CD4-positive, alpha-beta T cell (primary cell): ENCODE measurements at regions of chr7 and their contacts with region 1.

Region 1: GRCh38 chr7:6447581-6448199 is at the start of gene DAGLB:
- DNase-seq: peak; percentile 92 to 99 (median 96)
- ATAC-seq: peak; percentile 76
- H3K4me3 ChIP-seq: peak within 1 kb of the TSS; percentile 89
- H3K4me3 Mint-ChIP-seq: peak within 1 kb of the TSS; percentile 99
- H3K27ac ChIP-seq: peak within 1 kb of the TSS; percentile 73 to 81
- H3K27ac Mint-ChIP-seq: peak within 1 kb of the TSS; percentile 99
- H3K4me1 ChIP-seq: peaks cover 36% of the 10 kb centered on the region
- H3K4me1 Mint-ChIP-seq: peaks cover 40% of the 10 kb centered on the region
- H3K27me3 ChIP-seq: no peaks in the 10 kb centered on the region
- H3K27me3 Mint-ChIP-seq: no peaks in the 10 kb centered on the region
- CTCF ChIP-seq: no peak
- total RNA-seq, gene DAGLB: 22.0 to 22.9 TPM

Region 2: GRCh38 chr7:4689668-4690067 is 1758.0 kb before region 1 on chr7:
- CTCF ChIA-PET with region 1: no interaction called
- POLR2A ChIA-PET with region 1: no interaction called
- intact Hi-C with region 1: loop called in 1 of 2 experiments (anchors 5 kb)
- DNase-seq: no peak
- ATAC-seq: no peak
- H3K4me3 ChIP-seq: no peak overlapping the region
- H3K4me3 Mint-ChIP-seq: no peak overlapping the region
- H3K27ac ChIP-seq: no peak overlapping the region
- H3K27ac Mint-ChIP-seq: peak overlapping the region; percentile 19
- H3K4me1 ChIP-seq: peaks cover 63% of the 10 kb centered on the region
- H3K4me1 Mint-ChIP-seq: peaks cover 76% of the 10 kb centered on the region
- H3K27me3 ChIP-seq: no peaks in the 10 kb centered on the region
- H3K27me3 Mint-ChIP-seq: no peaks in the 10 kb centered on the region
- CTCF ChIP-seq: no peak

Region 3: GRCh38 chr7:6272481-6273323 is 175.0 kb before region 1 on chr7 and contains the start of gene CYTH3:
- CTCF ChIA-PET with region 1: no interaction called
- POLR2A ChIA-PET with region 1: no interaction called
- intact Hi-C with region 1: loop called in 1 of 2 experiments (anchors 5 kb)
- DNase-seq: peak; percentile 39 to 91 (median 72)
- ATAC-seq: peak; percentile 82
- H3K4me3 ChIP-seq: peak within 1 kb of the TSS; percentile 74
- H3K4me3 Mint-ChIP-seq: peak within 1 kb of the TSS; percentile 91
- H3K27ac ChIP-seq: no peak within 1 kb of the TSS
- H3K27ac Mint-ChIP-seq: no peak within 1 kb of the TSS
- H3K4me1 ChIP-seq: peaks cover 21% of the 10 kb centered on the region
- H3K4me1 Mint-ChIP-seq: peaks cover 20% of the 10 kb centered on the region
- H3K27me3 ChIP-seq: no peaks in the 10 kb centered on the region
- H3K27me3 Mint-ChIP-seq: peaks cover 6% of the 10 kb centered on the region
- CTCF ChIP-seq: no peak
- total RNA-seq, gene CYTH3: 7.6 to 9.1 TPM

Region 4: GRCh38 chr7:6350433-6351058 is 97.1 kb before region 1 on chr7:
- CTCF ChIA-PET with region 1: no interaction called
- POLR2A ChIA-PET with region 1: interaction called, 4 read pairs
- intact Hi-C with region 1: loop called in 1 of 2 experiments (anchors 1 kb)
- DNase-seq: no peak
- ATAC-seq: no peak
- H3K4me3 ChIP-seq: no peak overlapping the region
- H3K4me3 Mint-ChIP-seq: peak overlapping the region; percentile 4
- H3K27ac ChIP-seq: no peak overlapping the region
- H3K27ac Mint-ChIP-seq: no peak overlapping the region
- H3K4me1 ChIP-seq: peaks cover 17% of the 10 kb centered on the region
- H3K4me1 Mint-ChIP-seq: peaks cover 7% of the 10 kb centered on the region
- H3K27me3 ChIP-seq: no peaks in the 10 kb centered on the region
- H3K27me3 Mint-ChIP-seq: peaks cover 10% of the 10 kb centered on the region
- CTCF ChIP-seq: no peak

Region 5: DNA sequence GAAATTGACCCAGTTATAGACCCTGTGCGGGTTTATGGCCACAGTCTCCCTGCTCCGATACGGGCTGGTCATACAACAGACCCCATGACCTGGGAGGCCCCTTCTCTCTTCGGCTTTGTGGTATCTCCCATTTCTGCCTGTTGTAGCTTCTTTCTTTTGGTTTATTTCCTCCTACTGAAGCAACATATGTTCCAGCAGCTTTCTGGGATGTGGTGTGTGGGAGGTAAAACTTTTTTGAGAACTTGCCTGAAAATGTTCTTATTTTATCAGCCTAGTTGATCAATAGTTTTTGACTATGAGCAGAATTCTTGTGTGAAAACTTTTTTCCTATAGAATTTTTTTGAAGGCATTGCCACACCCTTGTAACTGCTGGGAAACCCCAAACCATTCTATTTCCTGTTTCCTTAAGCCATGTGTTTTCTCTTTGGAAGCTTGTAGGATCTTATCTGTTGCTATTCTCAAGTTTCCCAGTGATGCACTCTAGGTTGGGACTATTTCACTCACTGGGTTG is 79.9 kb before region 1 on chr7:
- CTCF ChIA-PET with region 1: no interaction called
- POLR2A ChIA-PET with region 1: no interaction called
- intact Hi-C with region 1: no loop called
- DNase-seq: no peak
- ATAC-seq: no peak
- H3K4me3 ChIP-seq: no peak overlapping the region
- H3K4me3 Mint-ChIP-seq: no peak overlapping the region
- H3K27ac ChIP-seq: no peak overlapping the region
- H3K27ac Mint-ChIP-seq: no peak overlapping the region
- H3K4me1 ChIP-seq: peaks cover under 1% of the 10 kb centered on the region
- H3K4me1 Mint-ChIP-seq: peaks cover 5% of the 10 kb centered on the region
- H3K27me3 ChIP-seq: no peaks in the 10 kb centered on the region
- H3K27me3 Mint-ChIP-seq: no peaks in the 10 kb centered on the region
- CTCF ChIP-seq: no peak

Region 6: DNA sequence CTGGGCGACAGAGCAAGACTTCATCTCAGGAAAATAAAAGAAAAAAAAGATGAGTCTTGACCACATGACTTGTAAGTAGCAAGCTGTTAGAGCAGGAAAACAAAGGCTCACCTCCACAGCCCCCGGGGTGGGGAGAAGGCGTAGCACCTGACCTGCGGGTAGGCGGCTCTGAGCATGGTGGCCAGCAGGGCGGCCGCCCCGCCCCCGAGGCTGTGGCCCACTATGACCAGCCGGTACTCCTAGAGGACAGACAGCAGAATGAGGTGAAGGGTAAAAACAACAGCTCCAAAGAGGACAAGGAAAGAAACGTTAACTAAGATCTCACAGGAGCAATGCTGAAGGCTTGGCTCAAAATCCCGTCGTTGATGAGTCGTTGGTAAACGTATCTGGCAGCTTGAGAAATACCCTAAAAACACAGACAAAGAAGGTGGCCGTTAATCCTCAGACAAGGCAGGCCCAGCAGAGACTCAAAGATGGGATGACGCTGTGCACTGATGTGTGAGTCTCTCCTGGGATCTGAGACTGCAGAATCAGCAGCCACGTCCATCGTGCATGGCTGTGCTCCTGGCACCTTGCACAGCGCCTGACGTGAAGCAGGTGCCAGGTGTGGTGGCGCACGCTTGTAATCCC is 31.1 kb before region 1 on chr7:
- CTCF ChIA-PET with region 1: no interaction called
- POLR2A ChIA-PET with region 1: no interaction called
- intact Hi-C with region 1: no loop called
- DNase-seq: no peak
- ATAC-seq: no peak
- H3K4me3 ChIP-seq: no peak overlapping the region
- H3K4me3 Mint-ChIP-seq: no peak overlapping the region
- H3K27ac ChIP-seq: no peak overlapping the region
- H3K27ac Mint-ChIP-seq: no peak overlapping the region
- H3K4me1 ChIP-seq: no peaks in the 10 kb centered on the region
- H3K4me1 Mint-ChIP-seq: no peaks in the 10 kb centered on the region
- H3K27me3 ChIP-seq: no peaks in the 10 kb centered on the region
- H3K27me3 Mint-ChIP-seq: no peaks in the 10 kb centered on the region
- CTCF ChIP-seq: no peak

Region 7: GRCh38 chr7:6435486-6436384 is 12.0 kb before region 1 on chr7:
- CTCF ChIA-PET with region 1: interaction called, 11 read pairs
- POLR2A ChIA-PET with region 1: interaction called, 50 read pairs
- intact Hi-C with region 1: no loop called
- DNase-seq: peak; percentile 82 to 94 (median 87)
- ATAC-seq: peak; percentile 93
- H3K4me3 ChIP-seq: peak overlapping the region; percentile 45
- H3K4me3 Mint-ChIP-seq: peak overlapping the region; percentile 68
- H3K27ac ChIP-seq: peak overlapping the region; percentile 18 to 39
- H3K27ac Mint-ChIP-seq: peak overlapping the region; percentile 81
- H3K4me1 ChIP-seq: peaks cover 47% of the 10 kb centered on the region
- H3K4me1 Mint-ChIP-seq: peaks cover 46% of the 10 kb centered on the region
- H3K27me3 ChIP-seq: no peaks in the 10 kb centered on the region
- H3K27me3 Mint-ChIP-seq: no peaks in the 10 kb centered on the region
- CTCF ChIP-seq: peak; percentile 98

Region 8: GRCh38 chr7:6480323-6480660 is 32.6 kb after region 1 on chr7:
- CTCF ChIA-PET with region 1: no interaction called
- POLR2A ChIA-PET with region 1: interaction called, 3 read pairs
- intact Hi-C with region 1: loop called in 1 of 2 experiments (anchors 2 kb)
- DNase-seq: no peak
- ATAC-seq: no peak
- H3K4me3 ChIP-seq: no peak overlapping the region
- H3K4me3 Mint-ChIP-seq: peak overlapping the region; percentile 56
- H3K27ac ChIP-seq: no peak overlapping the region
- H3K27ac Mint-ChIP-seq: peak overlapping the region; percentile 27
- H3K4me1 ChIP-seq: peaks cover 54% of the 10 kb centered on the region
- H3K4me1 Mint-ChIP-seq: peaks cover 82% of the 10 kb centered on the region
- H3K27me3 ChIP-seq: no peaks in the 10 kb centered on the region
- H3K27me3 Mint-ChIP-seq: no peaks in the 10 kb centered on the region
- CTCF ChIP-seq: no peak

Region 9: DNA sequence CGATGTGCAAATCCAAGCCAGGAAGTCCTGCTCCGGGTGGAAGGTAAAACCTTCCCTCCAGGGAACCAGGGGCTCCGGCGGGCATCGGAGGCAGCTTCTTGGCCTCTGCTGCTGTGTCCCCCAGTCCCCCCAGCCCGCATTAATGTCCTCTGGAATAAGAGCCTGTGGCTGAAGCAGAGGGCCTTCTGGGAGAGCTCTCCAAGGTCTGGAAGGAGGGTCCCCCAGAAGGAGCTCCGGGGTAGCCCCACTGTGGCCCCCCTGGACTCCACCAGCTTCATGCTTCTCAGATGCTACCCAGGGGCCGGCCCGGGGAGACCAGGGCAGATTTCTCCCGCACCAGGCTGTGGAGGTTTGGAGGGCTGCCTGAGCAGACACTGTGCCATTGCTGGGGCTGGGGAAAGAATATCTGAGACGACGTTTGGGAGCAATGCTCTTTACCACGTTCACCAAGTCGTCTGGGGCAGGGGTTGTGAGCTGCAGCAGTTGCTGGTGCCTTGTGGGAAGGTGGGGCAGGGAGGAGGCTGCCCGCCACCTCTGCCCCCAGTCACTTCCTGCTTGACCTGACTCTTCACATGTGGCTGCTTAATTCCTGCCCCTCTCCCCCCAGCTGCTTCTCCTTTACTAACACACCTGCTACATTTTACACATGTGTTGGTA is 176.0 kb after region 1 on chr7:
- CTCF ChIA-PET with region 1: no interaction called
- POLR2A ChIA-PET with region 1: no interaction called
- intact Hi-C with region 1: no loop called
- DNase-seq: peak in 4 of 14 experiments; percentile 41 to 61 (median 44)
- ATAC-seq: peak; percentile 52
- H3K4me3 ChIP-seq: peak overlapping the region; percentile 14
- H3K4me3 Mint-ChIP-seq: peak overlapping the region; percentile 72
- H3K27ac ChIP-seq: peak overlapping the region; percentile 23 to 58
- H3K27ac Mint-ChIP-seq: peak overlapping the region; percentile 84
- H3K4me1 ChIP-seq: peaks cover 48% of the 10 kb centered on the region
- H3K4me1 Mint-ChIP-seq: peaks cover 32% of the 10 kb centered on the region
- H3K27me3 ChIP-seq: no peaks in the 10 kb centered on the region
- H3K27me3 Mint-ChIP-seq: no peaks in the 10 kb centered on the region
- CTCF ChIP-seq: no peak

Region 10: DNA sequence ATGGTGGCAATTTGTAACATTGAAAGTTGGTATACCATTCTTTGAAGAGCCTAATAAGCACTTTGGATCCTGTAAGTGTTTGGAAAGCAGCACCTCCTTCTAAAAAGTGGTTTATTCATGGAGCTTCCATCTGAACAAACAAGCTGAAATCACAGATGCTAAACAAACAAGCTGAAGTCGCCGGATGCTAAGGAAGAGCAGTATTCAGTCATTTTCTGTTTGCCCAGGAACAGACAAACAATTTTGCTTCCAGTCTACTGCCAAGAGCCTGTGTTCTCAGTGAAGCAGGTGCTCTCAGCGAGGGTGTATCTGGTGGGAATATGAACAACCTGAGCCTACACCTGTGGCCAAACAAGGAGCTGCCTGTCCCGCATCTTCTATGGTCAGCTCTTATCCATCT is 1081.6 kb after region 1 on chr7:
- CTCF ChIA-PET with region 1: no interaction called
- POLR2A ChIA-PET with region 1: no interaction called
- intact Hi-C with region 1: no loop called
- DNase-seq: no peak
- ATAC-seq: no peak
- H3K4me3 ChIP-seq: no peak overlapping the region
- H3K4me3 Mint-ChIP-seq: no peak overlapping the region
- H3K27ac ChIP-seq: no peak overlapping the region
- H3K27ac Mint-ChIP-seq: no peak overlapping the region
- H3K4me1 ChIP-seq: no peaks in the 10 kb centered on the region
- H3K4me1 Mint-ChIP-seq: no peaks in the 10 kb centered on the region
- H3K27me3 ChIP-seq: no peaks in the 10 kb centered on the region
- H3K27me3 Mint-ChIP-seq: peaks cover 4% of the 10 kb centered on the region
- CTCF ChIP-seq: no peak